Prostate gland (tissue), 2 donors: ENCODE measurements at regions of chr3 and their contacts with region 1.

Region 1: GRCh38 chr3:113745273-113746068 is 578 bp downstream of the NAA50 start:
- DNase-seq: peak; percentile 89
- H3K4me3 ChIP-seq: peak overlapping the region; percentile 85 to 93
- H3K27ac ChIP-seq: peak overlapping the region; percentile 99
- H3K4me1 ChIP-seq: no peaks in the 10 kb centered on the region
- H3K27me3 ChIP-seq: no peaks in the 10 kb centered on the region
- CTCF ChIP-seq: peak in 3 of 4 experiments; percentile 66 to 89 (median 79)
- POLR2A ChIP-seq: peak; percentile 63

Region 2: GRCh38 chr3:113354307-113354706 is 391.2 kb before region 1 on chr3:
- intact Hi-C with region 1: no loop called
- DNase-seq: no peak
- H3K4me3 ChIP-seq: no peak overlapping the region
- H3K27ac ChIP-seq: no peak overlapping the region
- H3K4me1 ChIP-seq: no peaks in the 10 kb centered on the region
- H3K27me3 ChIP-seq: no peaks in the 10 kb centered on the region
- CTCF ChIP-seq: no peak
- POLR2A ChIP-seq: no peak

Region 3: DNA sequence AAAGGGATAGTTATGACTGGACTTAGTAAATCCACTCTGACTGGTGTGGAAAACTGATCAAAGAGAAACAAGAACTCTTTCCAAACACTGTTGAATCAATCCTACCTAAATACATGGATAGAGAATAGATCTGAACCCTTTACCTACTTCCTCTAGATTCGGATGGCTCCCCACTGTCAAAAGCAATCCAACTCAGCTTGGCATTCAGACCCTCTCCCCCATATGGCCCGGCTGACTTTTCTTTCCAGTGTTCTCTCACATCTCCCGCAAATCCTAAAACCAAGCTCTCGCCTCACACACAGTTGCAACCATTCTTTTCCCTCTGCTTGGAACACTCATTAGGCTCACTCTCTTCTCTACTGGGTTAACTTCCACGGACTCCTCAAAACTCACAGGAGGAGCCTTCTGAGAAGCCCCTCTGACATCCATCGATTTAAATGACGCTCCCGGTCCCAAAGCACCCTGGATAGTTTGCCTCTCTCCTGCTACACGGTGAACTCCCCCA is 231.2 kb before region 1 on chr3:
- intact Hi-C with region 1: loop called (anchors 10 kb)
- DNase-seq: no peak
- H3K4me3 ChIP-seq: peak overlapping the region; percentile 64 to 66
- H3K27ac ChIP-seq: peak overlapping the region; percentile 82 to 85
- H3K4me1 ChIP-seq: no peaks in the 10 kb centered on the region
- H3K27me3 ChIP-seq: no peaks in the 10 kb centered on the region
- CTCF ChIP-seq: no peak
- POLR2A ChIP-seq: no peak

Region 4: DNA sequence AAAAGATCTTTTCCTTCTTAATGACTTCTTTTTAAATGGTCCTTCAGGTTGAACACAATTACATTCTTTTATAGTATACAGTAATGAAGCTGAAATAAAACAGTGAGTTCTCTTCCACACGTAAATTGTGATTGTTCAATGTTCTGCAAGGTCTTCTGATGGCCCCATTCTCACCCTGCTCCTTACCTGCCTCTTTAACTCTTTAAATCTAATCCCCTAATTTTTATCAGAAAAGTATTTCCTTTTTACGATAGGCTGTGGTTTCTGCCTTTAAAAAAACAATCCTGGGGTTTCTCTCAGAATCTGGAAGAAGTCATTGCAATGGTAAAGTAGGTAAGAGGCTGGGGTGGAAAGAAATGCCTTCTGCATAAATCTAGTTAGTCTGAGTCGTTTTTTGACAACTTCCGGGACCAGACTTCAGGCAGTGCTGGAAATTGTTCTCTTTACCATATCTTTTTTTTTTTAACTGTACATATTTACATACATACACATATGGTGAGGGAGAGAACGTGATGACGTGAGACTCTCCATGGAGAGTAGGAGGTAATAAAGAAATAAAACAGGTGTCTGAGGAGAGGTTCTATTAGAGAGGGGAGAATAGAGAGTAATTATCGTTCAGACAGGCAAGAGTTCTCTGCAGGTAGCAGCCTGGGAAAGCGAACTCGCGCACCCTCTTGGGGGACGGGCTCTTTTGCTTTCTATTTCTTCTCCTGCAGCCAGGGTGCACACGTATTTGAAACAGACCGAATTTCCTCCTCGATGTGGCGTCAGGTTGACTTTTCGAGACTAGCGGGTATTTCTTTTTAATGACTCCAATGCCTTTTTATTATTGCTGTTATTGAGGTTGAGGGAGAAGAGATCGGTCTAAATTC is 213.4 kb before region 1 on chr3 and contains the start of gene SIDT1:
- intact Hi-C with region 1: no loop called
- DNase-seq: peak; percentile 69
- H3K4me3 ChIP-seq: peak within 1 kb of the TSS; percentile 52 to 65
- H3K27ac ChIP-seq: peak within 1 kb of the TSS; percentile 71 to 81
- H3K4me1 ChIP-seq: no peaks in the 10 kb centered on the region
- H3K27me3 ChIP-seq: no peaks in the 10 kb centered on the region
- CTCF ChIP-seq: peak in 2 of 4 experiments; percentile 32 to 35
- POLR2A ChIP-seq: no peak
- total RNA-seq, gene SIDT1: 19.9 to 31.2 TPM

Region 5: DNA sequence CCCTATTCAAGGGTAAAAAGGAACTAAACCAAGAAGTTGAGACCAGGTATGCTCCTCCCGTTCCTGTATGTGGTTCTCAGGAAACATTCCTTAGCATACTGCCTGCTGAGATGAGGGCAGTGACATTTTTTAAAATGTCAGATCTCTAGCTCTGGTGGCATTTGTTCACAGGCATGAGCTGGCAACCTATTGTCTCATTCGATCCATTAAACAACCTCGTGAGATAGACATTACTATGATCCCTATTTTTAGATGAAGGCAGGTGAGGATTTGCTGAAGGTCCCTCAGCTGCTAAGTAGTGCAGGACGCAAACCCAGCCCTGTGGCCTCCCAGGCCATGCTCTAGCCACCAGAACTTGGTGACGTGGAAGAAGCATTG is 138.3 kb before region 1 on chr3:
- intact Hi-C with region 1: no loop called
- DNase-seq: no peak
- H3K4me3 ChIP-seq: no peak overlapping the region
- H3K27ac ChIP-seq: no peak overlapping the region
- H3K4me1 ChIP-seq: no peaks in the 10 kb centered on the region
- H3K27me3 ChIP-seq: no peaks in the 10 kb centered on the region
- CTCF ChIP-seq: no peak
- POLR2A ChIP-seq: no peak

Region 6: DNA sequence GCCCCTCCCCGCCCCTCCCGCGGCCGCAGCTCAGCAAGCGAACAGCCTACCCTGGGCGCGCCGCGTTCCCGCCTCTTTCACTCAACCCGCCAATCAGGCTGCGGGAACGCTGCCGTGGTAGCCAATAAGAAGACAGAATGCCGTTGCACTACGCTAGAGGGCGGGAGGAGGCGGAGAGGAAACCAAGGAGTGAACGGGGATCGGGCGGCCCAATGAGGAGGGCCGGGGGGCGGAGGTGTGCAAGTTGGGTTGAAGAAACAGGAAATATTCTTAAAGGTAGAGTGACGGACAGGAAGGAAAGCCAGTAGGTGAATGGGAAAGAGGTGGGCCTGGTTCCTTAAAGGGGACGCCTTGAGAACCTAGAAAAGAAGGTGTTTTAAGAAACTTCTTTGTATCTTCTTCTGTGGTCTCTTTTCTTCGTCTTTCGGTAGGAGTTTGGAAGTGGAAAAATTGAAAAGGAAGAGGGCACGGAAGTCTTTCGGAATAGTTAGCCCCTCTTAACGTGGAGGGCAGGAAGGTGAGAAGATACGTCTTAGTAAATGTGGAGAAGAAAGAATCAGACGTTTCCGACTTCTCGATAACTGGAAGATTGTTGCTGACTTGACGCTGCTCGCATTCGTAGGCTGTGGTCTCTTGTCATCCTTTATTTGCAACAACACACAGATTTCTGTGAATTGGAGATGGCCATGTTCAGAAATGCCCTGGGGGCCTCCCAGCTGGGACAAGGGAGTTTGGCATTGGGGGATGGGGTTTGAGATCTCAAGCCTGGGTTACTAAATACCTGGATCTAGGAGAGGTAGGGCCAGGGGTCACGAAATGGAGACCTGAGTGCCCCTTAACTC is 48.6 kb before region 1 on chr3:
- intact Hi-C with region 1: loop called (anchors 2 kb)
- DNase-seq: peak; percentile 100
- H3K4me3 ChIP-seq: peak overlapping the region; percentile 99 to 100
- H3K27ac ChIP-seq: peak overlapping the region; percentile 100
- H3K4me1 ChIP-seq: no peaks in the 10 kb centered on the region
- H3K27me3 ChIP-seq: no peaks in the 10 kb centered on the region
- CTCF ChIP-seq: peak in 3 of 4 experiments; percentile 10 to 75 (median 43)
- POLR2A ChIP-seq: no peak

Region 7: GRCh38 chr3:113867506-113867905 is 122.0 kb after region 1 on chr3:
- intact Hi-C with region 1: no loop called
- DNase-seq: no peak
- H3K4me3 ChIP-seq: no peak overlapping the region
- H3K27ac ChIP-seq: no peak overlapping the region
- H3K4me1 ChIP-seq: no peaks in the 10 kb centered on the region
- H3K27me3 ChIP-seq: no peaks in the 10 kb centered on the region
- CTCF ChIP-seq: no peak
- POLR2A ChIP-seq: no peak

Region 8: GRCh38 chr3:114056130-114057010 is 310.9 kb after region 1 on chr3 and contains the starts of genes CCDC191 and QTRT2:
- intact Hi-C with region 1: loop called (anchors 10 kb)
- DNase-seq: peak; percentile 99
- H3K4me3 ChIP-seq: peak within 1 kb of the TSS; percentile 60 to 74
- H3K27ac ChIP-seq: peak within 1 kb of the TSS; percentile 80 to 83
- H3K4me1 ChIP-seq: peaks cover 12% of the 10 kb centered on the region
- H3K27me3 ChIP-seq: no peaks in the 10 kb centered on the region
- CTCF ChIP-seq: peak in 2 of 4 experiments; percentile 20 to 23
- POLR2A ChIP-seq: peak; percentile 25
- total RNA-seq, gene CCDC191: 4.6 to 8.1 TPM
- total RNA-seq, gene QTRT2: 11.7 to 20.8 TPM